Activated CD8-positive, alpha-beta memory T cell treated with anti-CD3 and anti-CD28 coated beads, Interleukin-2, amount 10 ng/mL, durations not matched to agents 7 days and 5 days (primary cell): ENCODE measurements at regions of chr10 and their contacts with region 1.

Region 1: GRCh38 chr10:7687228-7687907 is 15.7 kb upstream of the ITIH2 start:
- DNase-seq: peak; percentile 90
- ATAC-seq: peak; percentile 99
- H3K4me3 Mint-ChIP-seq: no peak overlapping the region
- H3K27ac Mint-ChIP-seq: no peak overlapping the region
- H3K4me1 Mint-ChIP-seq: peaks cover 9% of the 10 kb centered on the region
- H3K27me3 Mint-ChIP-seq: peaks cover 19% of the 10 kb centered on the region

Region 2: GRCh38 chr10:7275761-7276440 is 411.5 kb before region 1 on chr10:
- CTCF ChIA-PET with region 1: no interaction called
- DNase-seq: no peak
- ATAC-seq: no peak
- H3K4me3 Mint-ChIP-seq: no peak overlapping the region
- H3K27ac Mint-ChIP-seq: no peak overlapping the region
- H3K4me1 Mint-ChIP-seq: peaks cover 33% of the 10 kb centered on the region
- H3K27me3 Mint-ChIP-seq: no peaks in the 10 kb centered on the region

Region 3: GRCh38 chr10:7533657-7534479 is 153.5 kb before region 1 on chr10:
- CTCF ChIA-PET with region 1: interaction called, 16 read pairs
- DNase-seq: no peak
- ATAC-seq: no peak
- H3K4me3 Mint-ChIP-seq: no peak overlapping the region
- H3K27ac Mint-ChIP-seq: no peak overlapping the region
- H3K4me1 Mint-ChIP-seq: peaks cover 4% of the 10 kb centered on the region
- H3K27me3 Mint-ChIP-seq: peaks cover 21% of the 10 kb centered on the region

Region 4: GRCh38 chr10:7662522-7662921 is 24.8 kb before region 1 on chr10:
- CTCF ChIA-PET with region 1: interaction called, 12 read pairs
- DNase-seq: no peak
- ATAC-seq: no peak
- H3K4me3 Mint-ChIP-seq: no peak overlapping the region
- H3K27ac Mint-ChIP-seq: no peak overlapping the region
- H3K4me1 Mint-ChIP-seq: peaks cover 6% of the 10 kb centered on the region
- H3K27me3 Mint-ChIP-seq: peaks cover 54% of the 10 kb centered on the region